CD4-positive, alpha-beta memory T cell (primary cell): ENCODE measurements at regions of chr3 and their contacts with region 1.

Region 1: GRCh38 chr3:66472313-66473134 is 28.3 kb downstream of the LRIG1 start:
- DNase-seq: peak in 2 of 5 donors; percentile 48 to 74
- H3K4me3 ChIP-seq: peak overlapping the region; percentile 23 to 50
- H3K4me3 Mint-ChIP-seq: peak overlapping the region; percentile 57 to 86 (median 75)
- H3K27ac ChIP-seq: peak overlapping the region; percentile 29
- H3K27ac Mint-ChIP-seq: peak overlapping the region; percentile 0 to 90 (median 77)
- H3K4me1 ChIP-seq: peaks cover 92% of the 10 kb centered on the region
- H3K4me1 Mint-ChIP-seq: peaks cover 30 to 51% (median 41%) of the 10 kb centered on the region in 4 donors
- H3K27me3 ChIP-seq: no peaks in the 10 kb centered on the region
- H3K27me3 Mint-ChIP-seq: no peaks in the 10 kb centered on the region

Region 2: DNA sequence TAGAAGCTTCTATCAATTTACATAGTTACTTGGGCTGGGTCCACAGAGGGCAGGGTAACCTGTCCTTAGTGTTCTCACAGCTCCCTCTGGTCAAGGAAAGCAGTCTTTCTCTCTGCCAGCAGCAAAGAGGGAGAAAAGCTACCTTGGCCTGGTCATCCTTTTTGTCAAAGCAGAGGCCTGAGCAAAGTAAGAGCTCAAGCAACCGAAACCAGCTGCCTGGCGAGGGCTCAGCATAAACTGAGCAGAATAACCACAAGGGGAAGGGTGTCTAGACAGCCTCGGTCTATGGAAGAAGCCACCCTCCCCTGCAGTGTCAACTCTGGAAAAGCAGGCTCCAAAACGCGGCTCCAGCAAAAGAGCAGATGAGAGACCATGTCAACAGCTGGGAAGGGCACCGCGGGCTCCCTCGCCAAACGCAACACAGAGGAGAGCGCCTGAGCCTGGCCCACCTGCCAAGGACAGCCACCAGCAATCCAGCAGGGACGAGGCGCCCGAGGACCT is 10.9 kb after region 1 on chr3:
- CTCF ChIA-PET with region 1: interaction called, 4 read pairs
- POLR2A ChIA-PET with region 1: interaction called, 17 read pairs
- intact Hi-C with region 1: loop called (anchors 1 kb)
- DNase-seq: peak in 2 of 5 donors; percentile 34 to 63
- H3K4me3 ChIP-seq: no peak overlapping the region
- H3K4me3 Mint-ChIP-seq: peak overlapping the region; percentile 59 to 89 (median 74)
- H3K27ac ChIP-seq: no peak overlapping the region
- H3K27ac Mint-ChIP-seq: peak overlapping the region; percentile 68 to 83 (median 81)
- H3K4me1 ChIP-seq: peaks cover 97% of the 10 kb centered on the region
- H3K4me1 Mint-ChIP-seq: peaks cover 53 to 79% (median 64%) of the 10 kb centered on the region in 4 donors
- H3K27me3 ChIP-seq: no peaks in the 10 kb centered on the region
- H3K27me3 Mint-ChIP-seq: no peaks in the 10 kb centered on the region

Region 3: GRCh38 chr3:66490214-66490613 is 17.7 kb after region 1 on chr3:
- CTCF ChIA-PET with region 1: interaction called, 5 read pairs
- POLR2A ChIA-PET with region 1: interaction called, 17 read pairs
- intact Hi-C with region 1: no loop called
- DNase-seq: peak in 1 of 5 donors; percentile 37
- H3K4me3 ChIP-seq: peak overlapping the region; percentile 18 to 30
- H3K4me3 Mint-ChIP-seq: peak overlapping the region; percentile 74 to 93 (median 82)
- H3K27ac ChIP-seq: peak overlapping the region; percentile 31
- H3K27ac Mint-ChIP-seq: peak overlapping the region; percentile 30 to 91 (median 61)
- H3K4me1 ChIP-seq: peaks cover 100% of the 10 kb centered on the region
- H3K4me1 Mint-ChIP-seq: peaks cover 71 to 98% (median 86%) of the 10 kb centered on the region in 4 donors
- H3K27me3 ChIP-seq: no peaks in the 10 kb centered on the region
- H3K27me3 Mint-ChIP-seq: no peaks in the 10 kb centered on the region

Region 4: GRCh38 chr3:66495646-66496045 is 23.1 kb after region 1 on chr3:
- CTCF ChIA-PET with region 1: interaction called, 5 read pairs
- POLR2A ChIA-PET with region 1: interaction called, 17 read pairs
- intact Hi-C with region 1: no loop called
- DNase-seq: no peak
- H3K4me3 ChIP-seq: no peak overlapping the region
- H3K4me3 Mint-ChIP-seq: peak overlapping the region in 7 of 8 donors; percentile 51 to 99 (median 75)
- H3K27ac ChIP-seq: no peak overlapping the region
- H3K27ac Mint-ChIP-seq: peak overlapping the region; percentile 34 to 87 (median 67)
- H3K4me1 ChIP-seq: peaks cover 87% of the 10 kb centered on the region
- H3K4me1 Mint-ChIP-seq: peaks cover 72 to 94% (median 81%) of the 10 kb centered on the region in 4 donors
- H3K27me3 ChIP-seq: no peaks in the 10 kb centered on the region
- H3K27me3 Mint-ChIP-seq: no peaks in the 10 kb centered on the region

Region 5: GRCh38 chr3:67067251-67067650 is 594.7 kb after region 1 on chr3:
- CTCF ChIA-PET with region 1: no interaction called
- POLR2A ChIA-PET with region 1: no interaction called
- intact Hi-C with region 1: no loop called
- DNase-seq: no peak
- H3K4me3 ChIP-seq: no peak overlapping the region
- H3K4me3 Mint-ChIP-seq: no peak overlapping the region
- H3K27ac ChIP-seq: no peak overlapping the region
- H3K27ac Mint-ChIP-seq: no peak overlapping the region
- H3K4me1 ChIP-seq: no peaks in the 10 kb centered on the region
- H3K4me1 Mint-ChIP-seq: peaks cover 0 to 3% (median 1%) of the 10 kb centered on the region in 4 donors
- H3K27me3 ChIP-seq: no peaks in the 10 kb centered on the region
- H3K27me3 Mint-ChIP-seq: peaks cover 0 to 2% of the 10 kb centered on the region in 2 donors